ENCODE measurements at regions of chr3 and their contacts with region 1.

Region 1: GRCh38 chr3:165185707-165186327 is 10.4 kb downstream of the SLITRK3 start:
- DNase-seq: peak; percentile 55
- ATAC-seq: peak; percentile 99
- H3K4me3 ChIP-seq: no peak overlapping the region
- H3K27ac ChIP-seq: no peak overlapping the region
- H3K4me1 ChIP-seq: no peaks in the 10 kb centered on the region
- H3K27me3 ChIP-seq: no peaks in the 10 kb centered on the region
- CTCF ChIP-seq: peak; percentile 85
- EP300 ChIP-seq: no peak
- POLR2A ChIP-seq: no peak
- RAD21 ChIP-seq: peak; percentile 74

Region 2: GRCh38 chr3:163916596-163917554 is 1268.9 kb before region 1 on chr3:
- CTCF ChIA-PET with region 1: interaction called, 3 read pairs
- POLR2A ChIA-PET with region 1: no interaction called
- in situ Hi-C with region 1: loop called (anchors 10 kb)
- intact Hi-C with region 1: loop called (anchors 2 kb)
- DNase-seq: peak; percentile 6
- ATAC-seq: peak; percentile 58
- H3K4me3 ChIP-seq: no peak overlapping the region
- H3K27ac ChIP-seq: no peak overlapping the region
- H3K4me1 ChIP-seq: no peaks in the 10 kb centered on the region
- H3K27me3 ChIP-seq: no peaks in the 10 kb centered on the region
- CTCF ChIP-seq: peak; percentile 33
- EP300 ChIP-seq: no peak
- POLR2A ChIP-seq: no peak
- RAD21 ChIP-seq: no peak

Region 3: DNA sequence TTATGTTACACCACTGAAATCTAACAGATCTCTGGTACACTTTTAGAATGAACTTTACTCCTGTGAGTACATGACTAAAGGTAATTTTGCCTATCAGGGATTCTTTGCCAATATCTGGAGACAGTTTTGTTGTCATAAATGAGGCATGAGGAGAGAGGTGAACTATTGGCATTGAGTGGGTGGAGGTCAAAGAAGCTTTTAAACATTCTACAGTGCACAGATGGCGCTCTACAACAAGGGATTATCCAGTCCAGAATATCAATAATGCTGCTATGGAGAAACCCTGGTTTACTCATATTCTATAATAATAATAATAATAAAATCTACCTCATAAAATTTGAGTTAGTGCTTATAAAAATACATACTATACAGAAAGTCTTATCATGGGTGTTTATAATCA is 809.8 kb before region 1 on chr3:
- CTCF ChIA-PET with region 1: no interaction called
- POLR2A ChIA-PET with region 1: no interaction called
- in situ Hi-C with region 1: no loop called
- intact Hi-C with region 1: loop called (anchors 10 kb)
- DNase-seq: no peak
- ATAC-seq: no peak
- H3K4me3 ChIP-seq: no peak overlapping the region
- H3K27ac ChIP-seq: no peak overlapping the region
- H3K4me1 ChIP-seq: no peaks in the 10 kb centered on the region
- H3K27me3 ChIP-seq: no peaks in the 10 kb centered on the region
- CTCF ChIP-seq: peak; percentile 14; the same call in 1 of the 2 replicates
- EP300 ChIP-seq: no peak
- POLR2A ChIP-seq: no peak
- RAD21 ChIP-seq: no peak

Region 4: DNA sequence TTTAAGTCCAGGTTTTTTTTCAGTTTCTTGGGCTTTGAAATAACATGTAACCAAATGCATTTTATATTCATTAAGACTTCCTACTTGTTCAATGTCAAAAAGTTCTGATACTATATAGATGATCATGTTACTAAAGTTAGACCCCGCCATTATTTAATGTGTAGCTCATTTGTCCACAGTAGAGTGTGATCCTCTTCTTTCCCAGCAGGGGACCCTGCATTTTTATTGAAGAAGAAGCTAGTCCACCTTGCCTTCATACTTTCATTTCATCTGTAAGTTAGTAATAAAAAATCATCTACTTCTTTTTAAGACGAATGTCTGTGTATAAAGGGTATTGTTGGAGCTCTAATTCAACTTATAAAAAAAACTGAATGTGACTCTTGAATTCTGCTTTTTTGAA is 512.1 kb before region 1 on chr3:
- CTCF ChIA-PET with region 1: no interaction called
- POLR2A ChIA-PET with region 1: no interaction called
- in situ Hi-C with region 1: no loop called
- intact Hi-C with region 1: loop called (anchors 1 kb)
- DNase-seq: peak; percentile 4
- ATAC-seq: peak; percentile 61; the same call in 2 of the 3 replicates
- H3K4me3 ChIP-seq: no peak overlapping the region
- H3K27ac ChIP-seq: no peak overlapping the region
- H3K4me1 ChIP-seq: no peaks in the 10 kb centered on the region
- H3K27me3 ChIP-seq: no peaks in the 10 kb centered on the region
- CTCF ChIP-seq: no peak
- EP300 ChIP-seq: no peak
- POLR2A ChIP-seq: no peak
- RAD21 ChIP-seq: no peak

Region 5: DNA sequence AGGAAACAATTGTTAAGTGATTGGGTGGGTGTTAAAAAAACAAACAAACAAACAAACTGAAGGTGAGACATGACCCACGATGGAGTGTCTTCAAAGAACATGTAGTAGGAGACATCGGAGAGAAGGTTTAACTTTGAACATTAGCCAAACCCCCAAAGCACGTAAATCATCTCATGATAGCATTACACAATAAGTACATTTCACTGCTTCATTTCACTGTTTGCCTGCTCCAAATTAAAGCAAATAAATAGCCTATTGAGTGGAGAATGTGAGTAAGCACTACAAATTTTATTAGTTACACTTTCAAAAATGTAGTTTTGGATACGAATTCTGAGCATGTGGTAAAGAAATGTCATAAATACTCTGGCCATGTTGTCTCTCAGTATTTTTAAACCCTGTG is 394.6 kb before region 1 on chr3:
- CTCF ChIA-PET with region 1: no interaction called
- POLR2A ChIA-PET with region 1: no interaction called
- in situ Hi-C with region 1: no loop called
- intact Hi-C with region 1: loop called (anchors 10 kb)
- DNase-seq: no peak
- ATAC-seq: no peak
- H3K4me3 ChIP-seq: no peak overlapping the region
- H3K27ac ChIP-seq: no peak overlapping the region
- H3K4me1 ChIP-seq: no peaks in the 10 kb centered on the region
- H3K27me3 ChIP-seq: no peaks in the 10 kb centered on the region
- CTCF ChIP-seq: no peak
- EP300 ChIP-seq: no peak
- POLR2A ChIP-seq: no peak
- RAD21 ChIP-seq: no peak

Region 6: DNA sequence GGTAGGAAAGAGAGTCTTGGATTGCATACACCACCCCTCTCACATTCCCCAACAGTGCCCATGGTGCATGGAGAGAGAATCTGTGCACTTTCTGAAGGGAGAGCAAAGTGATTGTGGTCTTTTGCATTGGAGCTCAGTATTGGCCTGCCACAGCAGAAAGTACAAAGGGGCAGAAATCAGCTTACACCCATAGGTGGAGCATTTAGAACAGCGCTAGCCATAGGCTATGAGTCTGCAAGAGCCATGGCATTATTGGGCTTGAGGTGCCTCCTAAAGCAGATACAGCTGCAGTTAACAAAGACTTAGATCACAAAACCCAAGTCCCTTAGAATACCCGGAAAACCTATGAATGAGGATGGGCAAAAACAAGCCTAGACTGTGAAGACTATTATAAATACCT is 129.3 kb before region 1 on chr3:
- CTCF ChIA-PET with region 1: no interaction called
- POLR2A ChIA-PET with region 1: no interaction called
- in situ Hi-C with region 1: no loop called
- intact Hi-C with region 1: loop called (anchors 5 kb)
- DNase-seq: no peak
- ATAC-seq: peak; percentile 85
- H3K4me3 ChIP-seq: no peak overlapping the region
- H3K27ac ChIP-seq: no peak overlapping the region
- H3K4me1 ChIP-seq: no peaks in the 10 kb centered on the region
- H3K27me3 ChIP-seq: no peaks in the 10 kb centered on the region
- CTCF ChIP-seq: 0 out of 2 replicates have a peak, but pooled peaks have one; percentile 11
- EP300 ChIP-seq: no peak
- POLR2A ChIP-seq: no peak
- RAD21 ChIP-seq: no peak

Region 7: DNA sequence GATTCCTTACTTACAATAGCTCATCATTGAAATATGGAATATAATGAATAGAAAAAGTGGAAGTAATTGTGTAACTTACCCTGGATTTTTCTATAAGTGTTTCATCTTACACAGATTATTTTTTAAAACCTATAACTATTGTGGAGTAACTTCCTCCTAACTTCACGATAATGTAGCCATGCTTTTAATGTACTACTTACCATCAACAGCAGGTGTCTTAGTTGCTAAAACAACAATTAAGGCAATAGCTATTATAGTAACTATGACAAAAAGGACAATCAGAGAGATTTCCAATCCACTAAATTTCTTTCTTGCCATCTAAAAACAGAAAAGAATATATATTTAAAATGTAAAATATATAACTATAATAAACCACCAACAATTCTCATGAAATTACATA is 110.1 kb before region 1 on chr3:
- CTCF ChIA-PET with region 1: interaction called, 5 read pairs
- POLR2A ChIA-PET with region 1: no interaction called
- in situ Hi-C with region 1: no loop called
- intact Hi-C with region 1: loop called (anchors 1 kb)
- DNase-seq: no peak
- ATAC-seq: no peak
- H3K4me3 ChIP-seq: no peak overlapping the region
- H3K27ac ChIP-seq: no peak overlapping the region
- H3K4me1 ChIP-seq: no peaks in the 10 kb centered on the region
- H3K27me3 ChIP-seq: no peaks in the 10 kb centered on the region; a peak in 1 of 5 replicates
- CTCF ChIP-seq: no peak
- EP300 ChIP-seq: no peak
- POLR2A ChIP-seq: no peak
- RAD21 ChIP-seq: no peak

Measured in HepG2 (cell line).